ENCODE measurements at regions of chr9 and their contacts with region 1.

Region 1: DNA sequence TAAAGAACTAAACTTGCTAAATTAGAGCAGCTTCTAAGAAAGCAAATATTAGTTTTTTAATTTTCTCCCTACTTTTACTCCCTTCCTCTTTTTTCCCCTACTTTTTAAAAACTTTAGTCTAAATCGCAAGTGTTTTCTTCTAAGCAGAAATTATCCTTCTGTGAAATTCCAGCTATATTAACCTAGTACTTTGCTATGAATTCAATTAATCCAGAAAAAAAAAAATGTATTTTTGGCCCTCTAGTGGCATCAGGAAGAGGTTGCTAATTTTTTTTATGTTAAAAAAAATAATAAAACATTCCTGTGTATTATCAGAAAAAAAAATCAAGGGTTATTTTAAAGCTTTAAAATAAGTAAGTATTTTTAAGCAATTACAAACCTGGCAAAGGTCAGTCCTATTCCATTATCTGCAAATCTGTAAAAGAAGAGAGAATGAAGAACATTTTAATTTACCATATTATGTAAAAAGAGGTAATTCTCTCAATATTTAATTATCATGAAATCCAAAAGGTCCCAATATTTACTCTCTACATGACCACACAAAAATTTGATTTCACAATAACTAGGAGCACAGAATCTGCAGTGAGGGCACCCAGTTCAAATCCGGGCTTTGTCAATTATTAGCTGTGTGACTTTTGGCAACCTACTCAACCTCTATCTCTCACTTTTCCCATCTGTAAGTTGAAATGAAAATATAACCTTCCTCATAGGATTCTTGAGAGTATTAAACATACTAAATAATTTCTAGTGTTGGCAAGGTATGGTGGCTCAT is 52.0 kb downstream of the CEMIP2 start:
- DNase-seq: no peak
- ATAC-seq: no peak
- H3K4me3 Mint-ChIP-seq: no peak overlapping the region
- H3K27ac Mint-ChIP-seq: peak overlapping the region; percentile 57
- H3K4me1 Mint-ChIP-seq: no peaks in the 10 kb centered on the region
- H3K27me3 Mint-ChIP-seq: no peaks in the 10 kb centered on the region

Region 2: DNA sequence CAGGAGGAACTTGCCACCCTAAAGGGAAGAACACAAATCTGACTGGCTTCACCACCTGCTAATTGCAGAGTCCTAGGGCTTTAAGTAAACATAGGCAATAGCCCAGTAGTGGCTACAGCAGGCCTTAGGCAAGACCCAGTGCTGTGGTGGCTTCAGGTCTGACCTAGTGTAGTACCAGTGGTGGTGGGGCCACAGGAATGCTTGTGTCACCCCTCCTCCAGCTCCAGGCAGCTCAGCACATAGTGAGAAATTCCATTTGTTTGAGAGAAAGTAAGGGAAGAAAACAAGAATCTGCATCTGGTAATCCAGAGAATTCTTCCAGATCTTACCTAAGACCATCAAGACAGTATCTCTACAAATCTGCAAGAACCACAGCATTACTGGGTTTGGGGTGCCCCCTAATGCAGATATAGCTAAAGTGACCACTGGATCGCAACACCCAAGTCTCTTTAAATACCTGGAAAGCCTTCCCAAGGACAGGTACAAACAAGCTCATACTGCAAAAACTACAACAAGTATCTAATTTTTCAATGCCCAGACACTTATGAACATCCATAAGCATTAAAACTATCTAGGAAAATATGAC is 492.3 kb before region 1 on chr9:
- CTCF ChIA-PET with region 1: no interaction called
- POLR2A ChIA-PET with region 1: no interaction called
- DNase-seq: no peak
- ATAC-seq: no peak
- H3K4me3 Mint-ChIP-seq: no peak overlapping the region
- H3K27ac Mint-ChIP-seq: no peak overlapping the region
- H3K4me1 Mint-ChIP-seq: no peaks in the 10 kb centered on the region
- H3K27me3 Mint-ChIP-seq: no peaks in the 10 kb centered on the region

Region 3: GRCh38 chr9:71683598-71684235 is 32.6 kb before region 1 on chr9:
- CTCF ChIA-PET with region 1: interaction called, 13 read pairs
- POLR2A ChIA-PET with region 1: no interaction called
- DNase-seq: no peak
- ATAC-seq: no peak
- H3K4me3 Mint-ChIP-seq: peak overlapping the region; percentile 34
- H3K27ac Mint-ChIP-seq: peak overlapping the region; percentile 72
- H3K4me1 Mint-ChIP-seq: peaks cover 35% of the 10 kb centered on the region
- H3K27me3 Mint-ChIP-seq: no peaks in the 10 kb centered on the region

Region 4: GRCh38 chr9:71839665-71840064 is 123.3 kb after region 1 on chr9:
- CTCF ChIA-PET with region 1: no interaction called
- POLR2A ChIA-PET with region 1: no interaction called
- DNase-seq: no peak
- ATAC-seq: no peak
- H3K4me3 Mint-ChIP-seq: no peak overlapping the region
- H3K27ac Mint-ChIP-seq: no peak overlapping the region
- H3K4me1 Mint-ChIP-seq: no peaks in the 10 kb centered on the region
- H3K27me3 Mint-ChIP-seq: peaks cover 8% of the 10 kb centered on the region